AG04449 (cell line): ENCODE measurements at regions of chr2 and their contacts with region 1.

Region 1: DNA sequence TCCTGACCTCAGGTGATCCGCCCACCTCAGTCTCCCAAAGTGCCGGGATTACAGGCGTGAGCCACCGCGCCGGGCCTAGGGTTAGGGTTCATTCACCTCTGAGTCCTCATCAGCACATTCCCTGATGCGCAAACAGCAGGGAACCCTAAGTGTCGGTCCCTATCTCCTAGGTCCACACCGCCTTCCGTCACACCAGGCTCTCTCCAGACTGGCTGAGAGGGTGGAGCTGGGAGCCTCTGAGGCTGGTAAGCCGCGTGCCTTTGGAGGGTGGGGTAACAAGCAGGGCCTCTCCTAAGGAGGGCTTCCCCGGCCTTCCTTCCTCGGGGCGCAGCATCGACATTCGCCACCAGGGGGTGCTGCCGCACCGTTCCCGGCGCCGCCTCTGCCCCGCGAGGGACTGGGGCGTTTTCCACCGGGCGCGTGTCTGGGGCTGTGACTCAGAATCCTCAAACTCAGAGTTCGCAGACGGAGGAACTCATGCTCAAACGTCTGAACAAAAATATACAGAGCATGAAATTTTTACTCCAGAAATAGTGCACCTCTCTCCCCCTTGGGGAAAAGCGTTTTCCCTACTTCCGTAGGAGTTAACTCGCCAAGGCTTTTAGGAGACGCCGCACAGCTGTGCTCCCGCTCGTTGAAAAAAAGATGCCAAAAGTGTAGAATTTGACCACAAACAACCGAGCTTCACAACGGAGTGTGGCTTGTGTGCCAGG is 63.9 kb upstream of the ASAP2 start:
- DNase-seq: peak; percentile 52
- H3K4me3 ChIP-seq: peak overlapping the region; percentile 35
- CTCF ChIP-seq: peak; percentile 95

Region 2: DNA sequence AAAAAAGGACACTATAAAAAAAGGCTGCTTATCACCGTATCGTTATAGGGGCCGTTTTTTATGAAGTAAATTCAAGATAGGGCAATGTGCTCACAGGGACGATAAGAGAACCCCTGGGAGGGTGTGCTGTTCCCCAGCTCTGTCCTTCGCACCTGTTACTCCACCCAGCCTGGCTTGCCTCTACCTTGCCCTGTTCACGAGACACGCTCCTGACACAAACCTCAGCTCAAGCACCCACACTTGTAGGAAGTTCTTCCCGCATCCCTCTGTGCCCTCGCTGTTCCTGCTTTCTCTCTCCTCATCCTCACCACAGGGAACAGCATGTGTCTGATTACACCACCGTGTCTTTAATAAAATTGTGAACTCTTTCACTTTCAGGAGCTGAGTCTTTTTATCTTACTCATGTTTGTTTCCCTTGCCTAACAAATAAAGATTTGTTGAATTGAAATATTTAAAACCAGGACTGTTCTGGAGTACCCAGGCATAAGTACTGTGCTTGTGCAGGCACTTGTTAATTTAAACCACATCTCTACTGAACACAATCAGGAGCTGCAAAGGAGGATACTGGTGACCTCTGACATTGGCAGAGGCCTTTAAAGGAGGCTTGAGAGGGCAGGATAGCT is 279.3 kb before region 1 on chr2:
- CTCF ChIA-PET with region 1: interaction called, 11 read pairs
- POLR2A ChIA-PET with region 1: no interaction called
- DNase-seq: no peak
- H3K4me3 ChIP-seq: no peak overlapping the region
- CTCF ChIP-seq: no peak

Region 3: GRCh38 chr2:8882094-8882493 is 260.6 kb before region 1 on chr2:
- CTCF ChIA-PET with region 1: interaction called, 120 read pairs
- POLR2A ChIA-PET with region 1: no interaction called
- DNase-seq: no peak
- H3K4me3 ChIP-seq: no peak overlapping the region
- CTCF ChIP-seq: peak; percentile 28

Region 4: DNA sequence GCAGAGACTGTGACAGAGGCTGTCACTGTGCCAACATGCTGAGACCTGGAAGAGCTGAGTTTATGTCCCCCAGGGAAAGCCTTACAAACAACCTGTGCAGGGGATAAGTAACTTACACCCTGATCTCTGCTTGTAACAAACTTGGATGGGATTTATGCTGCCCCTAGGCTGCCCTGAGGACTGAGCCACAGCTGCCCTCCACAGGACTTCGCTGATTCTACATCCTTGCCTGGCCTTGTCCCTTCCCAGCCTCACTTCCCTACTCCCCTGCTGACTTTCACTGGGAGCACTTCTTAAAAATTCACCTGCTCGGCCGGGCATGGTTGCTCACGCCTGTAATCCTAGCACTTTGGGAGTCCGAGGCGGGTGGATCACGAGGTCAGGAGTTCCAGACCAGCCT is 18.0 kb after region 1 on chr2:
- CTCF ChIA-PET with region 1: interaction called, 11 read pairs
- POLR2A ChIA-PET with region 1: no interaction called
- DNase-seq: no peak
- H3K4me3 ChIP-seq: no peak overlapping the region
- CTCF ChIP-seq: no peak

Region 5: GRCh38 chr2:9333591-9334171 is 191.0 kb after region 1 on chr2:
- CTCF ChIA-PET with region 1: interaction called, 86 read pairs
- POLR2A ChIA-PET with region 1: no interaction called
- DNase-seq: peak; percentile 46
- H3K4me3 ChIP-seq: no peak overlapping the region
- CTCF ChIP-seq: peak; percentile 79

Region 6: DNA sequence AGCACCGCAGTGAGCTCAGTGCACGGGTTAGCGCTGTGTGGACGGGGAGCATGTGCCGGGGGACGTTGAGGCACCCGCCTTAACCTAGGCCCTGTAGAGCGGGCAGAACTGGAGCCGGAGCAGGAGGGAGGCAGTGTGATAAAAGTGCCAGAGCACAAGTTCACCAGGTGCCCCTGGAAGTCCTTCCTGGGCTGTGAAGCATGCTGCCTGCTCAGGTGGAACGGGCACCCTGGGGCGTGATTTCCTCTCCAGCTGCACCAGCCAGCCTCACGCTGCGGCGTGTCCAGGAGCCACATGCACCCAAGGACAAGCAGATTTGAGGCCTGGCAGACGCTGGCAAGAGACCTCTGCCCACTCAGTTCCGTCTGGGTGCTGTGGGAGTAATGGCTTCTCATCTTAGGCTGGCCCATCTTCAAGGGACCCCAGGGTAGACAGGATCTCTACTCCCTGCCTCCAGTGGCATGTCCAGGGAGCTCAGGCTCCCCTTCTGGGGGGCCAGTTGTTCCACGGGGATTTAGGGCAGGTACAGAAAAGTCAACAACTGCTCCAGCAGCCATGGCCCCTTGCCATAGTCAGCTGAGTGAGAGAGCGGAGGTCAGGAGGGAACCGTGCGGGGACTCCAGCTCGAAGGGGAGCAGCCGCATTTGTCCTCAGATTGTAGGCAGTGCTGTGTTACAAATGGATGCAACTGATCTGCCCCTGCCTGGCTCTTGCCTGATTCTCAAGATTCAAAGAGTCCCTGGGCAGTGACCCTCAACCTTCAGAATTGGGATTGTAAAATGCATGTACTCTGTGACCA is 230.6 kb after region 1 on chr2:
- CTCF ChIA-PET with region 1: interaction called, 118 read pairs
- POLR2A ChIA-PET with region 1: interaction called, 5 read pairs
- DNase-seq: no peak
- H3K4me3 ChIP-seq: no peak overlapping the region
- CTCF ChIP-seq: no peak